Ascending aorta (tissue), 2 donors: ENCODE measurements at regions of chr5 and their contacts with region 1.

Region 1: GRCh38 chr5:71782771-71783770 is 64.0 kb downstream of the CARTPT start:
- DNase-seq: peak; percentile 14 to 92
- H3K4me3 ChIP-seq: peak overlapping the region; percentile 41 to 49
- H3K27ac ChIP-seq: peak overlapping the region; percentile 76 to 77
- H3K4me1 ChIP-seq: peaks cover 9 to 10% of the 10 kb centered on the region in 2 donors
- H3K27me3 ChIP-seq: no peaks in the 10 kb centered on the region
- CTCF ChIP-seq: peak; percentile 78 to 86 (median 81)

Region 2: GRCh38 chr5:71640408-71640807 is 142.7 kb before region 1 on chr5:
- intact Hi-C with region 1: no loop called
- DNase-seq: no peak
- H3K4me3 ChIP-seq: no peak overlapping the region
- H3K27ac ChIP-seq: no peak overlapping the region
- H3K4me1 ChIP-seq: no peaks in the 10 kb centered on the region
- H3K27me3 ChIP-seq: no peaks in the 10 kb centered on the region
- CTCF ChIP-seq: no peak

Region 3: GRCh38 chr5:71830681-71831539 is 47.8 kb after region 1 on chr5:
- intact Hi-C with region 1: loop called (anchors 2 kb)
- DNase-seq: peak; percentile 48 to 95
- H3K4me3 ChIP-seq: peak overlapping the region in 1 of 2 donors; percentile 34
- H3K27ac ChIP-seq: peak overlapping the region; percentile 75 to 92
- H3K4me1 ChIP-seq: peaks cover 6 to 22% of the 10 kb centered on the region in 2 donors
- H3K27me3 ChIP-seq: no peaks in the 10 kb centered on the region
- CTCF ChIP-seq: no peak

Region 4: DNA sequence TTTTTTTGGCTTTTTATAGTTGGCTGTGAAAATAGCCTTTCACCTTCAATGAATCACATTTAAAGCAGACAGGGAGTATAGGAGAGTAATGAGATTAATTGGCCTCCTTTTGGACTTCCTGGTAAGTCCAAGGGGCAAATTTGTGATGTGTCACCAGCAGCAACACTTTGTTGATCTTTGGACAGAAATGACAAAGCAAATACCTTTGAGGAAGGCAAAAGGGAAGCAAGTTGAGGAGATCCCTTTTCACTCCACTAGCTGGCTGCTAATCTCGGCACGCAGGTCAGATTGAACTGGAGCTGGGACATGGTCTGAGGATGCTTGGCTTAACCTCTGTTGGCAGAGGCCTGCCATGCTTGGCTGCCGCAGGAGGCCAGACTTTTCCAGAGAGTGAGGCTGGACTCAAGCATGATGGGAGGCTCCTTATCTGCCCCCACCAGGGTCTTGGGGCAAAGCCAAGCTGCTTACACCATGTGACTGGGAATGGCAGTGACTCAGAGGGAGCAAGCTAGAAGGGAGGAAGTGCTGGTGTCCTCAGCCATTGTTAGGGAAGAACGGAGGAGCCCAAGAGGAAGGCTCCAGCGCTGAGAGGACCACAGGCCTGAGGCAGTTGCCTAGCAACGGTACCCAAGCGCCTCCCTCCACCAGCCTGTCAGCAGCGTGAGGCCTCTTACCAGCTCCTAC is 149.7 kb after region 1 on chr5:
- intact Hi-C with region 1: loop called (anchors 5 kb)
- DNase-seq: peak; percentile 79 to 94
- H3K4me3 ChIP-seq: no peak overlapping the region
- H3K27ac ChIP-seq: peak overlapping the region; percentile 94 to 96
- H3K4me1 ChIP-seq: peaks cover 10 to 15% of the 10 kb centered on the region in 2 donors
- H3K27me3 ChIP-seq: no peaks in the 10 kb centered on the region
- CTCF ChIP-seq: peak in 2 of 3 experiments; percentile 7 to 13

Region 5: GRCh38 chr5:72082049-72082448 is 299.0 kb after region 1 on chr5:
- intact Hi-C with region 1: no loop called
- DNase-seq: no peak
- H3K4me3 ChIP-seq: no peak overlapping the region
- H3K27ac ChIP-seq: no peak overlapping the region
- H3K4me1 ChIP-seq: no peaks in the 10 kb centered on the region
- H3K27me3 ChIP-seq: no peaks in the 10 kb centered on the region
- CTCF ChIP-seq: no peak

Region 6: DNA sequence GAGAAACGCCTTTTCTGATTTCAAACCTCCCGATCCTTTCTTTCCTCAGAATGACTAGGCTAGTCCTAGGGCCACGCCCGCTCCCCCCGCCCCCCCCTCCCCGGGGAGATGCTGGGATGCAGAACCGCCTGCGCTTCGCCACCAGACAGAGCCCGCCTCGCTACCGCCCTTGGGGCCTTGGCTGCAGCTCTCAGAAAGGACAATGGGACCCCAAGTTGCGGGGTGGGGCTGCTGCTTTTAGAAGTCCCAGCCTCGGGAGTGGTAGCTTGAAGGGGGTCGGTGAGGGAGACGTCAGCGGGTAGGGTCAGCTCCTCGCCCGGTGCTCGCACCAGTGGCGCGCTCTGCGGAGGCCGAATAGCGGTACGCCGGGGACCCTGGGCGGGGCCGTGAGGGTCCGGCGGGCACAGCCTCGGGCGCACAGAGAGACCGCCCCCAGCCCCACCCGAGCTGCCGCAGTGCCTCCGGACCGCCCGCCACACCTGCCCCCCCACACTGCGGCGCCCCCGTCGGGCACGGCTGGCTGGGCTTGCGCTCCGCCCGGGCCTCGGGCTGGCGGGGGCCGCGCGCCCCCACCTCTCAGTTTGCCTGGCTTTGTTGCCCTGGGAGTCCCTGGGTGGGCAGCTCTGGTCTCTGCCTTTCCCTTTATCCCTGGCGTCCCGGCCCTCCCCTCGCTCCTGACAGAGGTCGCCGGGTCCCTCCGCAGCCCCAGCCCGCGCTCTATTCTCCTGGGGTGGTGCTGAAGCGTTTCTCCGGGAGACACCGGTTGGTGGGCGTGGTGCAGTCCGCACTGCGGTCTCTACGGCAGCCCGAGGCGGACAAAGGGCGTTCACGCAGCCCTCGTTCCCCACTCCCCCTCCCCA is 325.4 kb after region 1 on chr5:
- intact Hi-C with region 1: loop called (anchors 2 kb)
- DNase-seq: peak; percentile 56 to 93
- H3K4me3 ChIP-seq: peak overlapping the region; percentile 72 to 94
- H3K27ac ChIP-seq: peak overlapping the region; percentile 94 to 97
- H3K4me1 ChIP-seq: peaks cover 0 to 14% of the 10 kb centered on the region in 2 donors
- H3K27me3 ChIP-seq: no peaks in the 10 kb centered on the region
- CTCF ChIP-seq: no peak

Region 7: GRCh38 chr5:72307968-72308852 is 525.1 kb after region 1 on chr5:
- intact Hi-C with region 1: loop called (anchors 1 kb)
- DNase-seq: peak; percentile 90 to 99
- H3K4me3 ChIP-seq: peak overlapping the region; percentile 56 to 79
- H3K27ac ChIP-seq: peak overlapping the region; percentile 91 to 95
- H3K4me1 ChIP-seq: peaks cover 3 to 19% of the 10 kb centered on the region in 2 donors
- H3K27me3 ChIP-seq: no peaks in the 10 kb centered on the region
- CTCF ChIP-seq: peak; percentile 91 to 95 (median 91)